Sciatic nerve (tissue), 2 donors: ENCODE measurements at regions of chr4 and their contacts with region 1.

Region 1: GRCh38 chr4:184745831-184746795 is 12.2 kb upstream of the CENPU start:
- DNase-seq: peak; percentile 88
- ATAC-seq: peak; percentile 95

Region 2: GRCh38 chr4:184649971-184650855 is 95.9 kb before region 1 on chr4:
- intact Hi-C with region 1: loop called (anchors 10 kb)
- DNase-seq: no peak
- ATAC-seq: peak; percentile 48

Region 3: DNA sequence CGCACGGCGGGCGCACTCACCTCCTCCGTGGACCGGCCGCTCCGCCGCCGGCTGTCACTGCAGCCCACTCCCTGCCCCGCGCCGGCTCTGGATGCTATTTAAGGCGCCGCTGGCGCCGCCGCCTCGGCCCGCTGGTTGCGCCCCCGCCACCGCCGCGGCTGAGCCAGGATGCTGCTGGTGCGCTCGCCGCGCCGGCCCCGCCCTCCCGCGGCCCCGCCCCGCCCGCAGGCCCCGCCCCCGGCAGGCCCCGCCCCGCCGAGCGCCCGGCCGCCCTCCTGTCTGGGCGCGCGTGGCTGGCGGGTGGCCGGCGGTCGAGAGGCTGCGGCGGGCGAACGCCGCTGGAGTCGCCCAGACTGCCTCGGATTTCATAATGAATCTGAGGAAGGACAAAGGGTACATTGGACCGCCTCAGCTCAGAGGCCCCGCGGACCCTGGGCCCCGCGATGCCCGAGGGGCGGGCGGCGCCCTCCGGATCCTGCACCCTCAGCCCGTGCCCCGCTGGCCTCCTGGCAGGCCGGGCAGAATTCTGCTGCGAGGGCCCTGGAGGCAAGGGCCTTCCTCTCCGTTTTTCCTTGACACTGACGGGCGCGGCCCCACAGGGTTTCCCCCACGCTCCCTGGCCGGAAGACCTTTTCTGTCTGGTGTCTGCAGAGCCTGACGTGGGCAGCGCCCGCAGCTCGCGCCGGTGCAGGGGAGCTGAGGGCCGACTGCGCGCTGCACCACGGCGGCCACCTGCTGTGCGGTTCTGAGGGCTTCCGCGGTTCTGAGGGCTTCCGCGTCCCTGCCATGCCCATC is 80.0 kb after region 1 on chr4 and contains the start of gene ACSL1:
- intact Hi-C with region 1: loop called (anchors 10 kb)
- DNase-seq: peak; percentile 85
- ATAC-seq: peak; percentile 87
- total RNA-seq, gene ACSL1: 145 TPM

Region 4: GRCh38 chr4:185005216-185005819 is 259.2 kb after region 1 on chr4:
- intact Hi-C with region 1: loop called (anchors 10 kb)
- DNase-seq: peak; percentile 90
- ATAC-seq: peak; percentile 93